Calu3 (cell line): ENCODE measurements at regions of chr6 and their contacts with region 1.

Region 1: DNA sequence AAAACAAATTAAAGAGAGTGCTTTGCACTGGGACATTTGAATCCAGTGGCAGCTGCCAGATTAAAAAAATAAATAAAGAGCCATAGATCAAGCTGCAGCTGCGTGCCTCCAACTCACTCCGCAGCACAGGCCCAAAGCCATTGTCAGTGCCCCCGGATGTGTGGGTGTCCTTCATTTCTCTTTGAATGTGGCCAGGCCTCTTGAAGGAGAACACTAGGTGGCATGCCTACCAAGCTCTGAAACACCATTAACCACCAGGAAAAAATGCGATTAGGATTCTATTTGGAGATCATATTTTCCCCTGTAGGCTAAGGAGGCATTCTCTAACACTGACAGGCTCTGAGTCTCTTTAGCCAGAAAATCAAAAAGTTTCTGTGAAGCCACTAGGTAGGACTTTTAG is 549.8 kb downstream of the PRKN start:
- DNase-seq: no peak
- H3K4me3 Mint-ChIP-seq: no peak overlapping the region
- H3K27ac Mint-ChIP-seq: no peak overlapping the region
- H3K4me1 Mint-ChIP-seq: peaks cover 18% of the 10 kb centered on the region
- H3K27me3 Mint-ChIP-seq: no peaks in the 10 kb centered on the region
- CTCF ChIP-seq: no peak

Region 2: GRCh38 chr6:161439093-161439492 is 738.7 kb before region 1 on chr6:
- CTCF ChIA-PET with region 1: no interaction called
- intact Hi-C with region 1: no loop called
- DNase-seq: peak; percentile 76
- H3K4me3 Mint-ChIP-seq: peak overlapping the region; percentile 62
- H3K27ac Mint-ChIP-seq: peak overlapping the region; percentile 55
- H3K4me1 Mint-ChIP-seq: peaks cover 29% of the 10 kb centered on the region
- H3K27me3 Mint-ChIP-seq: no peaks in the 10 kb centered on the region
- CTCF ChIP-seq: no peak

Region 3: GRCh38 chr6:161836643-161837448 is 340.9 kb before region 1 on chr6:
- CTCF ChIA-PET with region 1: no interaction called
- intact Hi-C with region 1: loop called (anchors 10 kb)
- DNase-seq: peak; percentile 8
- H3K4me3 Mint-ChIP-seq: no peak overlapping the region
- H3K27ac Mint-ChIP-seq: no peak overlapping the region
- H3K4me1 Mint-ChIP-seq: peaks cover 6% of the 10 kb centered on the region
- H3K27me3 Mint-ChIP-seq: no peaks in the 10 kb centered on the region
- CTCF ChIP-seq: no peak

Region 4: GRCh38 chr6:162251257-162251656 is 73.5 kb after region 1 on chr6:
- CTCF ChIA-PET with region 1: no interaction called
- intact Hi-C with region 1: no loop called
- DNase-seq: no peak
- H3K4me3 Mint-ChIP-seq: no peak overlapping the region
- H3K27ac Mint-ChIP-seq: no peak overlapping the region
- H3K4me1 Mint-ChIP-seq: no peaks in the 10 kb centered on the region
- H3K27me3 Mint-ChIP-seq: no peaks in the 10 kb centered on the region
- CTCF ChIP-seq: no peak

Region 5: DNA sequence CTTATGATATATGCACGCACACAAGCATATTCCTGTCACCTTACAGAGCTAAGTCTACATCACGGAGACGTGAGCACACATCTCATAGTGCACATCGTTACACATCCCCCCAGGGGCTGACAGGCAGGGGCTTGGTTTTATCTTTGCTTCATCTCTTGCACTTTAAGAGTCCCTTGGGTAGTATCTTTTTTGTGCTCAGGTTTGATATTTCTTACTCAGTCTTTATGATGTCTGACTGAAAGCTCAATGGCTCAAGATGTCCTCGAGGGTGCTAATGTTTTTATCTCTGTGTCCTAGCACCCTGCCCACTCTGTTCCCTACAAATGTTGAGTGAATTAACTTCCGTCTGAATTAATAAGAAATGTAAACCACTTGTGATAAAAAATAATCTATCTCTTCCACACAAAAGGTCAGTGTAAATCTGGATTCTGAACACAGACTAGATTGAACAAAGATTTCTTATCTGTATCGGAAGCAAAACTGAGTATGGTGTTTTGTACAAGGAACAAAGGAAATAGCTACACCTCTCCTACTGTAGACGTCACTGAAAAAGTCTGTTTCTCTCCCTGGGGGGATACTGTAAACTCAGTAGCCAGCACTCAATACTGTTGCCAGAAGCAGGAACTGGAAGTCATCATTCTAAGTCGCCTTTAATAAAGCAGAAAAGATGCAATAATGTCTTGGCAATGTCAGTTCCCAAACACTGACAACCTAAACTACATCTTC is 354.7 kb after region 1 on chr6:
- CTCF ChIA-PET with region 1: no interaction called
- intact Hi-C with region 1: no loop called
- DNase-seq: no peak
- H3K4me3 Mint-ChIP-seq: no peak overlapping the region
- H3K27ac Mint-ChIP-seq: no peak overlapping the region
- H3K4me1 Mint-ChIP-seq: no peaks in the 10 kb centered on the region
- H3K27me3 Mint-ChIP-seq: no peaks in the 10 kb centered on the region
- CTCF ChIP-seq: no peak